Activated CD4-positive, alpha-beta memory T cell treated with anti-CD3 and anti-CD28 coated beads for 36 hours (primary cell): ENCODE measurements at regions of chr1 and their contacts with region 1.

Region 1: GRCh38 chr1:66350001-66350547 is 183.9 kb upstream of the SGIP1 start:
- DNase-seq: peak; percentile 77
- H3K4me3 Mint-ChIP-seq: peak overlapping the region; percentile 65
- H3K27ac Mint-ChIP-seq: peak overlapping the region; percentile 83
- H3K4me1 Mint-ChIP-seq: peaks cover 93% of the 10 kb centered on the region
- H3K27me3 Mint-ChIP-seq: no peaks in the 10 kb centered on the region

Region 2: DNA sequence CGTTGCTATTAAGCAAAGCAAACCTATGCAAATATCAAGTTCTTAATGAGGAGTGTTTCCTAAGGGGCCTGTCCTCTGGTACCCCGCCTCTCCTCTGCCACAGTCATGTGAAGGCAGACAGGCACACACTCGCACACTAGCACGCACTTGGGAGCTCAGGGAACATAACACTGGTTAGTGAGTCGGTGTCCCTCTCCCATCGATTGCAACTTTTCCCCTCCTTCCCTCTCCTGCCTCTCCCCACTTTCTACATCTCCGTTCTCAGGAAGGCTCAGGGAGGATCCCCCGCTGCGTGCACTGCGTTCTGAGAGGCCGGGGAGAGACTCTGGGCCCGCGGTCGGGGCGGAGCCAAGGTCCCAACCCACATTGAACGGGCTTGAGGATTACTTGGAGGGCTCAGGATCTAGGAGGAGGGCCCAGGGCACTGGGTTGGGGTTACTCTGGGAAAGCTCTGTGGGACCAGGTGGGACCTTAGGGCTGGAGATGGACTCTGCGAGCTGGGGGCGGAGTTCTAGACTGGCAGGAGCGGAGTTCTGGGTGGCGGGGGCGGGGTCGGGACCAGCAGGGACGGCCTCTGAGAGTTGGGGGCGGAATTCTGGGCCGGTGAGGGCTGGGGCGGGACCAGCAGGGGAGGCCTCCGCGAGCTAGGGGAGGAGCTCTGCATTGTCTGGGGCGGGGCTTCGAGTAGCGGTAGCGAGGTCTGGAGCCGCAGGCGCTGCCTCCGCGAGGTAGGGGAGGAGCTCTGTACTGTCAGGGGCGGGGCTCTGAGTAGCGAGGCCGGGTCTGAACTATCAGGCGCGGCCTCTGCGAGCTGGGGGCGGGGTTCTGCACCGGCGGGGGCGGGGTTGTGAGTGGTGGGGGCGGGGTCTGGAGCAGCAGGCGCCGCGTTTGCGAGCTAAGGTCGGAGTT is 930.1 kb before region 1 on chr1:
- CTCF ChIA-PET with region 1: no interaction called
- POLR2A ChIA-PET with region 1: no interaction called
- intact Hi-C with region 1: loop called (anchors 5 kb)
- DNase-seq: peak; percentile 99
- H3K4me3 Mint-ChIP-seq: peak overlapping the region; percentile 90
- H3K27ac Mint-ChIP-seq: peak overlapping the region; percentile 88
- H3K4me1 Mint-ChIP-seq: peaks cover 21% of the 10 kb centered on the region
- H3K27me3 Mint-ChIP-seq: no peaks in the 10 kb centered on the region

Region 3: DNA sequence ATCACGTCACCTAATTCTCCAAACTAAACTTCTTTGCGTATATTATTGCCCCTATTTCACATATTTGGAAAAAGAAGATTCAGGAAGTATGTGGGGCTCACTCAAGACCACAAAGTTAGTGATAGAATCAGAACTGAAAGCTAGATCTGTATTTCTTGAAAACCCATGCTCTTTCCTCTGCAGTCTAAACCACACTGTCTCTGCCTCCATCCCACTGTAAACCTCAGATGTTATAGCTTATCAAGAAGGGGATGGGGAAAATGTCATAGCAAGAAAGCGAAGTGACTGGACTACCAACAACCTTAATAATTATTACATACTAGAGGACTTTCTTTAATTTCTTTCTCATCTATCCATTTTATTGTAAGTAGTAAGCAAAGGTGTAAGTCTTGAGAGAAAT is 73.9 kb before region 1 on chr1:
- CTCF ChIA-PET with region 1: interaction called, 3 read pairs
- POLR2A ChIA-PET with region 1: interaction called, 18 read pairs
- intact Hi-C with region 1: loop called (anchors 1 kb)
- DNase-seq: peak; percentile 44
- H3K4me3 Mint-ChIP-seq: peak overlapping the region; percentile 49
- H3K27ac Mint-ChIP-seq: peak overlapping the region; percentile 65
- H3K4me1 Mint-ChIP-seq: peaks cover 87% of the 10 kb centered on the region
- H3K27me3 Mint-ChIP-seq: no peaks in the 10 kb centered on the region

Region 4: DNA sequence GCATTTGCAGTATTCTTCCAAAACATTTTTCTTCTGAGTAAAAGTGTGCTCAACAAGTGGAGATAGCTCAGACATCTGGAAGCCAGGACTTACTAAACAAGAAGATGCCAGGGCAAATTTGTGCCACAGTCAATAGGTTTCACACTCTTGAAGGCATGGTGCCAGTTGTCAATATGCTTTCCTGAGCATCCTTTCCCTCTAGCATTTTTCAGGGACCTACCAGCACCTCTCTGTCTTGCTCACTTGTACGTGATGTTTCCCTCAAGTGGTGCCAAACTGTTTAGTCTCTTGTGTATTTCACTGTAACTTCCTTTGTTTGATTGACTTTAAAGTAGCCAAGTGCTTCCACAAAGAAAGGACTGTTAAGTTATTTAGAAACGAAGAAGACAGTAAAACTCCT is 10.1 kb before region 1 on chr1:
- CTCF ChIA-PET with region 1: interaction called, 21 read pairs
- POLR2A ChIA-PET with region 1: interaction called, 108 read pairs
- intact Hi-C with region 1: loop called (anchors 1 kb)
- DNase-seq: no peak
- H3K4me3 Mint-ChIP-seq: peak overlapping the region; percentile 72
- H3K27ac Mint-ChIP-seq: peak overlapping the region; percentile 90
- H3K4me1 Mint-ChIP-seq: peaks cover 74% of the 10 kb centered on the region
- H3K27me3 Mint-ChIP-seq: no peaks in the 10 kb centered on the region

Region 5: DNA sequence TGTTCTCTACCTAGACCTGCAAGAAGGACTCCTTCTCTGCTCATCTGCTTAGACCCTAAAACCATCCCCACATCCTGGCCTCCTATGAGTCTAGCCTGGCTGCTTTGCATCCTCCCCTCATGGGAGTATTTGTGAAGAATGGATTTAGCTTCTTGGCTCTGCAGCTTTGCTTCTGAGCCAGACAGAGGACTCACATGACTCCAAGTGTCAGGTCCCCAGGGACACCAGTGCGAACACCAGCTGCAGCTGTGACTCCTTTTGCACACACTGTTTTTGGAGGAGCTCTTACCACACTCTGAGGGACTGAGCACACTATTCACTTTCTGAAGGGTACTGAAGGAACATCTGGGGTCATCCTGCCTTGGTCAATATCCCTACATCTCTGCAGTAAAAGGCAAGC is 52.1 kb after region 1 on chr1:
- CTCF ChIA-PET with region 1: no interaction called
- POLR2A ChIA-PET with region 1: no interaction called
- intact Hi-C with region 1: loop called (anchors 1 kb)
- DNase-seq: no peak
- H3K4me3 Mint-ChIP-seq: no peak overlapping the region
- H3K27ac Mint-ChIP-seq: no peak overlapping the region
- H3K4me1 Mint-ChIP-seq: peaks cover 31% of the 10 kb centered on the region
- H3K27me3 Mint-ChIP-seq: no peaks in the 10 kb centered on the region

Region 6: DNA sequence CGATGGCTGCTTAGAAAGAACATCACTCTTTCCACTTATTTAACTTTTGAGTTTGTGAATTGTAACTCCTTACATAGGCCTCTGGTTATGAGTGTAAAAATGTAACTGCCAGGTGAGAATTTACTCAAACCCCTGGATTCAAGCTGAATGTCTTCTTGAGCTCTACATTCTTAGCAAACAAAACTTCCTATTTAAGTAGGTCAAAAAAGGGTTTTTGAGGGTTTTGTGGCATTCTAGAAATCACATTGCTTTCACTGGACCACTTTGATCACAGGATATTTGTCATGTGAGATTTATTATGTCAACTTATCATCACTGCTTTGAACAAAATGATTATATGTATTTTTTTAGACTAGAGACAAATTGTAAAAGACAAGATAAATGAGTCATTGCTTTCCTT is 821.9 kb after region 1 on chr1:
- CTCF ChIA-PET with region 1: no interaction called
- POLR2A ChIA-PET with region 1: interaction called, 3 read pairs
- intact Hi-C with region 1: loop called (anchors 2 kb)
- DNase-seq: no peak
- H3K4me3 Mint-ChIP-seq: peak overlapping the region; percentile 74
- H3K27ac Mint-ChIP-seq: peak overlapping the region; percentile 99
- H3K4me1 Mint-ChIP-seq: peaks cover 72% of the 10 kb centered on the region
- H3K27me3 Mint-ChIP-seq: peaks cover 5% of the 10 kb centered on the region